HCT116 (cell line): ENCODE measurements at regions of chr3 and their contacts with region 1.

Region 1: DNA sequence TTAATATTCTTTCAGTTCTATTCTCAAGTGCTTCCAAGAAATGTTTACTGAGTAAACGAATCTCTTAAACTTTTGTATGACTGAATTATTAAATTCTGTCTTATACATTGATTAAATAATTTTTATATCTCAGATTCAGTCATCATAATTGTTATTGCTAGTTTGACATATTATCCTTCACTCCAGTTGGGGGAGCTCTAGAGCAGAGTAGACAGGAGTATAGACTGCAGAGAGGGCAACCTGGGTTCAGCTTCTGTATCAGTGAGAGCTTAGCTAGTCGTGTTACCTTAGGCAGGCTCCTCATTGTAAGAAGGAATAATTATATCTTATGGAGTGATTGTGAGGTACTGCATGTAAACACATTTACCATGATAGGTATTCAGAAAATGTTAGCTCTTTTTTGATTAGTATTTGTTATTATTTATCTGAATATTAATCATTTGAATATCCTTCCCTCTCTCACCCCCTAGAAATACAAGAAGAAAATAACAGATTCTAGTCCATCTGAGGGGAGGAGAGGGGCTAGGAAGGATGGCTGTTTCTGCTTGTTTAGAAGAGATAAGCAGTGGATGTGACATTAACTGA is 31.0 kb upstream of the ZCWPW2 start:
- DNase-seq: peak; percentile 28
- ATAC-seq: peak; percentile 96
- H3K4me3 ChIP-seq: no peak overlapping the region
- H3K27ac ChIP-seq: no peak overlapping the region
- H3K4me1 ChIP-seq: no peaks in the 10 kb centered on the region
- H3K27me3 ChIP-seq: no peaks in the 10 kb centered on the region
- CTCF ChIP-seq: peak; percentile 43 to 68 (median 66); a peak in 5 of 6 replicates
- POLR2A ChIP-seq: no peak
- RAD21 ChIP-seq: peak; percentile 36; the same call in 1 of the 2 replicates

Region 2: DNA sequence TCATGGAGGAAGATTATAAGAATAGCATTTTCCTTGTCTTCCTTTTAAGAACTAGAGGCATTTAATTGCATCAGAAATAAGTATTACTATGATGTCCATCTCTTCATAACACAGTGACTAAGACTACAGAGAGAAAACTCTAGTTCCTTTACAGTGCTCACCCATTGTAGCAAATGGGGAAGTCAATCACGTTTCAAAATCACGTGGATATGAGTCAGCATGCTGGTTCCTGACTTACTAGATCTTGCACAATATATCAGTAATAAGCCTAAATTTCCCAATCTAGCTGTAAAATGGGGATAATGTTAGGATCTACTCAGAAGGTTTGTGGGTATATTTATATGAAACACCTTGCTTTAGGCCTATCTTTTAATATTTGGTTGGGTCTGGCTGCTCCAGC is 340.6 kb before region 1 on chr3:
- CTCF ChIA-PET with region 1: no interaction called
- POLR2A ChIA-PET with region 1: no interaction called
- RAD21 ChIA-PET with region 1: no interaction called
- intact Hi-C with region 1: no loop called
- DNase-seq: no peak
- ATAC-seq: no peak
- H3K4me3 ChIP-seq: no peak overlapping the region
- H3K27ac ChIP-seq: no peak overlapping the region
- H3K4me1 ChIP-seq: no peaks in the 10 kb centered on the region
- H3K27me3 ChIP-seq: no peaks in the 10 kb centered on the region
- CTCF ChIP-seq: no peak
- POLR2A ChIP-seq: no peak
- RAD21 ChIP-seq: no peak

Region 3: GRCh38 chr3:28328188-28329151 is 10.9 kb after region 1 on chr3:
- CTCF ChIA-PET with region 1: interaction called, 13 read pairs
- POLR2A ChIA-PET with region 1: no interaction called
- RAD21 ChIA-PET with region 1: no interaction called
- intact Hi-C with region 1: no loop called
- DNase-seq: no peak
- ATAC-seq: peak; percentile 32; the same call in 1 of the 2 replicates
- H3K4me3 ChIP-seq: no peak overlapping the region
- H3K27ac ChIP-seq: no peak overlapping the region
- H3K4me1 ChIP-seq: no peaks in the 10 kb centered on the region
- H3K27me3 ChIP-seq: no peaks in the 10 kb centered on the region
- CTCF ChIP-seq: peak; percentile 25 to 75 (median 37); a peak in 3 of 6 replicates
- POLR2A ChIP-seq: no peak
- RAD21 ChIP-seq: peak; percentile 69

Region 4: GRCh38 chr3:28544236-28544635 is 226.7 kb after region 1 on chr3:
- CTCF ChIA-PET with region 1: no interaction called
- POLR2A ChIA-PET with region 1: no interaction called
- RAD21 ChIA-PET with region 1: no interaction called
- intact Hi-C with region 1: no loop called
- DNase-seq: no peak
- ATAC-seq: no peak
- H3K4me3 ChIP-seq: no peak overlapping the region
- H3K27ac ChIP-seq: no peak overlapping the region
- H3K4me1 ChIP-seq: no peaks in the 10 kb centered on the region
- H3K27me3 ChIP-seq: 0 out of 2 replicates have a peak, but pooled peaks cover 4% of the 10 kb centered on the region
- CTCF ChIP-seq: no peak
- POLR2A ChIP-seq: no peak
- RAD21 ChIP-seq: no peak